Naive thymus-derived CD8-positive, alpha-beta T cell (primary cell): ENCODE measurements at regions of chr3 and their contacts with region 1.

Region 1: GRCh38 chr3:120742198-120742849 is at the starts of genes GTF2E1 and RABL3:
- DNase-seq: peak; percentile 80 to 98 (median 98)
- ATAC-seq: peak; percentile 96
- H3K4me3 Mint-ChIP-seq: peak within 1 kb of the TSS; percentile 87 to 98 (median 95)
- H3K27ac Mint-ChIP-seq: peak within 1 kb of the TSS; percentile 95 to 99 (median 98)
- H3K4me1 Mint-ChIP-seq: peaks cover 22 to 50% (median 41%) of the 10 kb centered on the region in 4 donors
- H3K27me3 Mint-ChIP-seq: no peaks in the 10 kb centered on the region
- polyA plus RNA-seq, gene GTF2E1: 10.9 to 15.9 (median 11.5) TPM
- polyA plus RNA-seq, gene RABL3: 29.5 to 41.9 (median 39.0) TPM

Region 2: DNA sequence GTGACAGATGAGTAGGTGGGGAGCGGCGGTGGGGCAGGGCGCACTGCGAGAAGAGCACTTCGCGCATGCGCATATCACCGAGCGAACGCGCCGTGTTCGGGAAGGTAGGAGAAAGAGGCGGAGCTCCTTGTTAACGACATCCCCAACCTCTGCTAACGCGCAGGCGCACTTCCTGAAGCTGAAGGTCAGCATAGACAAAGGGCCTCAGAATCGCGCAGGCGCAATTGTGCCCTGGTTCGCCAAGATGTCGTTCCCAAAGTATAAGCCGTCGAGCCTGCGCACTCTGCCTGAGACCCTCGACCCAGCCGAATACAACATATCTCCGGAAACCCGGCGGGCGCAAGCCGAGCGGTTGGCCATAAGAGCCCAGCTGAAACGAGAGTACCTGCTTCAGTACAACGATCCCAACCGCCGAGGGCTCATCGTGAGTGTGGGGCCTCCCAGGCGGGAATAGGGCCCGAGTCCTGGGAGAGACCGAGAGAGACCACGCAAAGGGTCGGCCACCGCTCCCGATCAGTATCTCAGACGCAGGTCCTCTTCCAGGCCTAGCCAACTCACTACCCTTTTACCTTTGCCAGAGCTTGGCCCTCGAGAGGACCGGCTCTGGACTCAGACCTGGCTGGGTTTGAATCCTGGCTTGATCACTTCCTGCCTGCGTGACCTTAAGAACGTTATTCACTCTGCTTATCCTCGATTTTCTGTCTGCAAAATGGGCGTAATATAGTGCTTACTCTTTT is 146.0 kb before region 1 on chr3 and contains the start of gene NDUFB4:
- POLR2A ChIA-PET with region 1: interaction called, 37 read pairs
- DNase-seq: peak; percentile 89 to 98 (median 94)
- ATAC-seq: peak; percentile 91 to 93
- H3K4me3 Mint-ChIP-seq: peak within 1 kb of the TSS in 9 of 10 donors; percentile 90 to 98 (median 95)
- H3K27ac Mint-ChIP-seq: peak within 1 kb of the TSS in 8 of 10 donors; percentile 96 to 99 (median 98)
- H3K4me1 Mint-ChIP-seq: peaks cover 9 to 15% (median 13%) of the 10 kb centered on the region in 4 donors
- H3K27me3 Mint-ChIP-seq: peaks cover 0 to 2% (median 0%) of the 10 kb centered on the region in 5 donors
- polyA plus RNA-seq, gene NDUFB4: 249 to 277 (median 277) TPM

Region 3: GRCh38 chr3:120678331-120678947 is 63.9 kb before region 1 on chr3:
- POLR2A ChIA-PET with region 1: no interaction called
- DNase-seq: no peak
- ATAC-seq: no peak
- H3K4me3 Mint-ChIP-seq: peak overlapping the region in 2 of 10 donors; percentile 11 to 22
- H3K27ac Mint-ChIP-seq: peak overlapping the region in 2 of 10 donors; percentile 19 to 66
- H3K4me1 Mint-ChIP-seq: peaks cover 5 to 10% (median 8%) of the 10 kb centered on the region in 4 donors
- H3K27me3 Mint-ChIP-seq: peaks cover 0 to 7% (median 0%) of the 10 kb centered on the region in 5 donors

Region 4: GRCh38 chr3:120713262-120713661 is 29.1 kb before region 1 on chr3:
- POLR2A ChIA-PET with region 1: interaction called, 48 read pairs
- DNase-seq: no peak
- ATAC-seq: no peak
- H3K4me3 Mint-ChIP-seq: no peak overlapping the region
- H3K27ac Mint-ChIP-seq: peak overlapping the region in 2 of 10 donors; percentile 13 to 51
- H3K4me1 Mint-ChIP-seq: peaks cover 12 to 24% (median 18%) of the 10 kb centered on the region in 4 donors
- H3K27me3 Mint-ChIP-seq: no peaks in the 10 kb centered on the region

Region 5: DNA sequence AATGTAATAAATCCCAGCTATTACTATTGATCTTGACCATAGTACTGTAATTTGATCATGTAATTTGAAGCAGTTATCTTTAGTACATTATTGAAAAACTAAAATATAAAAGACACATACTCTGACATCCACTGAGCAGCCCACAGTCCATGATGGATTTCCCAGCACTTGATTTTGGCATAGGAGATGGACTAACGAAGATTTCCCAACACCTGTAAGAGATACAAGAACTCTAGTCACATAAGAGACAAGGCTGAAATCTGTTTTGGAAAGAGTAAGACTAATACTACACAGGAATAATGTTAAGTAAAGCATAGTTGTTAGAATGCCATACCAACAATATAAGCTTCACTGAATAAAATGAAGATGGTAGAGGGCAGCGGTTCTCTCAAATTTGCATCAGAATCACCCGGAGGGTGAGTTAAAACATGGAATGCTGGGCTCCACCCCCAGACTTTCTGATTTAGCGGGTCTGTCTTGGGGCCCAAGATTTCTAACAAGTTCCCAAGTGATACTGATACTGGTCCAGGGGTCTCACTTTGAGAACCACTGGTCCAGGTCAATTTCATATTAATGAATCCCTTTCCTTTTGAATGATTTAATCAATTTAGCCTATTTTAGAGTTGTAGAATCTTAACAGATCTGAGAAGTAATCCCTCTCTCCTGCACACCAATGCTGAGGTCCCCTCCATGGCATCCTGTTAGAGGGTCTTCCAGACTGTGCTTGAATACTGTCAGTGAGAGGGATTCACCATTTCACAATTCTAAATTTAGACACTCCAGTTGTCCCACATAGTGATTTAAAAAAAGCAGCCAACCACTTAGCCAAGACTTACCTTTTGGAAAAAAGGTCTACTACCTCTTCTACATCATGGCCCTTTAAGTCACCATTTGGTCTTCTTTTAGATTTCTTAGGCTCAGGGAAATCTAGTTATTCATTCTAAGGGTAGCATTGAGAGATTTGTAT is 11.5 kb before region 1 on chr3:
- POLR2A ChIA-PET with region 1: interaction called, 13 read pairs
- DNase-seq: no peak
- ATAC-seq: no peak
- H3K4me3 Mint-ChIP-seq: no peak overlapping the region
- H3K27ac Mint-ChIP-seq: peak overlapping the region in 9 of 10 donors; percentile 4 to 81 (median 47)
- H3K4me1 Mint-ChIP-seq: peaks cover 2 to 10% (median 5%) of the 10 kb centered on the region in 4 donors
- H3K27me3 Mint-ChIP-seq: no peaks in the 10 kb centered on the region